Mammary epithelial cell (primary cell): ENCODE measurements at regions of chr5 and their contacts with region 1.

Region 1: DNA sequence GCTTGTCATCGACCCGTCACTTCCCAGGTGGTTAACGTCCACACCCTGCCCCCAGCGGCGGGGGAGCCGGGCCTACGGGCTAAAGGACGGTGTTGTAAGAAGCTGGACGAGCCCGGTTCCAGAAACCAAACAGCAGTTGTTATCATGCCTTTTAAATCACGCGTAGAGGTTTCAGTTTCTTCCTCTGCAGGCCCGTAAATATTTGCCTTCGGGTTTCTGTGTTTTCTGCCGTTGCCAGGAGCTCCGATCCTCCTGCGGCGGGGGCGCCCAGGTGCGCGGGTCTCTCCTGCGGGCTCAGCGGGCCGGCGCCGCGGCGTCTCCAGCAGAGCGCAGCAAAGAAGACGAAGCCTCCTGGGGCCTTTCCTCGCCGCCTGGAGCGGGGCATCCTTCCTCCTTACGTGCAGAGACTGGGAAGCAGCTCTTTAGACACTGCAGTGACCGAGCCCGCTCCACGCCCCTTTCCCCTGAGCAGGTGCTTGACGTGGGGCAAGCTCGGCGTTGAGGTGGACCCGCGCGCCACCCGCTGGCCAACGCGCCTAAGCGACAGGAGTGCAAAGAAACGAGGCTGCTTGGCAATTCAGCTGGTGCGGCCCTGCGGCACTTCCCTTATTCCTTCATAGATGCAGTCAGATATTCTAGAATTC is 21.8 kb upstream of the TTC1 start:
- DNase-seq: peak; percentile 76
- H3K4me3 ChIP-seq: peak overlapping the region; percentile 11 to 21 (median 18)
- H3K27ac ChIP-seq: no peak overlapping the region
- H3K4me1 ChIP-seq: peaks cover 29% of the 10 kb centered on the region
- H3K27me3 ChIP-seq: no peaks in the 10 kb centered on the region
- CTCF ChIP-seq: peak; percentile 81 to 89

Region 2: DNA sequence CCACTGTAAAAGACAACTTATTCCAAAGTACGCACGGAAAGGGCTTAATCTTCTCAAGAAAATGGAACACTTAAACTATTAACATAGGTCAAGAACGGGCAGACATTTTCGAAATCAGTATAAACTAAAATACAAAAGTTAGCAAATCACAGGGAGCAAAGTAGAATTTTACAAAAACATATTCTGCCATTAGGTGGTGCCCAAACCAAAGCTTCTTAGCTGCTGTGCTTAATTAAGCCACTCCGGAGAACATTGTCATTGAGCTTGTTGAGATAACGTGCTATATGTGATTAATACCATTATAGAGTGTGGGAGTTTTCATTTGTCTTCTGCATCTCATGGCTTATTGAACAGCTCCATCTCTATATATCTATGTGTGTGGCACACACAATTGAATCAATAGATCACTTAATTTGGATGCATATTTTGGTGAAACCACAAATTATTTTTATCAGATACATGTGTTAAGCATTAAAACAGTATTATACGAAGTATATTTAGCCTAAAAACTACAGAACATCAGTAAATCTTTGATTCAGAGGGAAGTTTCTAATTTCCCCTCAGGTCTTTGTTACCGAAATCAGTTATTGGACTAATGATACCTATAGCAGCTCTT is 700.6 kb before region 1 on chr5:
- CTCF ChIA-PET with region 1: no interaction called
- dilution Hi-C with region 1: no loop called
- in situ Hi-C with region 1: no loop called
- intact Hi-C with region 1: loop called (anchors 1 kb)
- DNase-seq: peak; percentile 35
- H3K4me3 ChIP-seq: no peak overlapping the region
- H3K27ac ChIP-seq: no peak overlapping the region
- H3K4me1 ChIP-seq: no peaks in the 10 kb centered on the region
- H3K27me3 ChIP-seq: no peaks in the 10 kb centered on the region
- CTCF ChIP-seq: peak; percentile 30 to 57

Region 3: GRCh38 chr5:159444441-159445082 is 542.6 kb before region 1 on chr5:
- CTCF ChIA-PET with region 1: no interaction called
- dilution Hi-C with region 1: no loop called
- in situ Hi-C with region 1: loop called (anchors 5 kb)
- intact Hi-C with region 1: loop called (anchors 1 kb)
- DNase-seq: peak; percentile 60
- H3K4me3 ChIP-seq: no peak overlapping the region
- H3K27ac ChIP-seq: no peak overlapping the region
- H3K4me1 ChIP-seq: no peaks in the 10 kb centered on the region
- H3K27me3 ChIP-seq: no peaks in the 10 kb centered on the region
- CTCF ChIP-seq: peak; percentile 30 to 54

Region 4: GRCh38 chr5:159581502-159582249 is 405.5 kb before region 1 on chr5:
- CTCF ChIA-PET with region 1: interaction called, 4 read pairs
- dilution Hi-C with region 1: no loop called
- in situ Hi-C with region 1: no loop called
- intact Hi-C with region 1: loop called (anchors 1 kb)
- DNase-seq: peak; percentile 97
- H3K4me3 ChIP-seq: no peak overlapping the region
- H3K27ac ChIP-seq: peak overlapping the region; percentile 97
- H3K4me1 ChIP-seq: peaks cover 26% of the 10 kb centered on the region
- H3K27me3 ChIP-seq: no peaks in the 10 kb centered on the region
- CTCF ChIP-seq: peak; percentile 28 to 36

Region 5: GRCh38 chr5:159838551-159839222 is 148.5 kb before region 1 on chr5:
- CTCF ChIA-PET with region 1: interaction called, 3 read pairs
- dilution Hi-C with region 1: no loop called
- in situ Hi-C with region 1: no loop called
- intact Hi-C with region 1: loop called (anchors 5 kb)
- DNase-seq: peak; percentile 89
- H3K4me3 ChIP-seq: no peak overlapping the region
- H3K27ac ChIP-seq: peak overlapping the region; percentile 34
- H3K4me1 ChIP-seq: peaks cover 30% of the 10 kb centered on the region
- H3K27me3 ChIP-seq: no peaks in the 10 kb centered on the region
- CTCF ChIP-seq: no peak